RWPE1 (cell line): ENCODE measurements at regions of chr12 and their contacts with region 1.

Region 1: GRCh38 chr12:56468216-56469006 is at the start of gene SPRYD4:
- DNase-seq: peak; percentile 93
- H3K27ac ChIP-seq: peak within 1 kb of the TSS; percentile 83
- CTCF ChIP-seq: peak; percentile 56

Region 2: GRCh38 chr12:56448860-56449621 is 19.4 kb before region 1 on chr12 and contains the start of gene TIMELESS:
- CTCF ChIA-PET with region 1: interaction called, 10 read pairs
- POLR2A ChIA-PET with region 1: interaction called, 5 read pairs
- DNase-seq: peak; percentile 98
- H3K27ac ChIP-seq: peak within 1 kb of the TSS; percentile 97
- CTCF ChIP-seq: no peak

Region 3: DNA sequence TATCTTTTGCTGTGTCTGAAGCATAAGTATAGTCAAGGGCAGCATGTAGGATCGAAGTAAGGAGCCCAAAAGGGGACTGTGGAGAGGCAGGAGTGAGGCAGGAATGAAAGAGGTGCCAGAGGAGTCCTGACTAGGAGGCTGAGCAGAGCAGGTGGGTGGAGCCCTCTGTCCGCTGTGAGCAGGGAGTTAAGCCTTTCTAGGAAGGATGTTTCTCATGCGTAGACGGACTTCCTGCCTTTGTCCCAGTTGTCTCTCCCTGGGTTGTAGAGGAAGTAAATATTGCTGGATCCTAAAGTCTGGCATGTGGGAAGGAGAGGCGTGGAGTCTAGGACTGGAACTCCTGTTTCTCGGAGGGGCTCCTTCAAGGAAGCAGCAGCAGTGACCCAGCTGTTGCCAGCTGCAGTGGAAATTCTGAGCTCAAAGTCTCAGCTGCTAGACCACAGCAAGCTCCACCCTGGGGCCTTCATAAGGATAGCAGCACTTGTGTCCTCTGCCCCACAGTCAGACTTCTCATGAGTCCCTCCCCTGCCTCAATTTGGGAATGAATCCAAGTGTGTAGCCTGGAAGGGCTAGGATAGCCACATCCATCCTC is 97.2 kb after region 1 on chr12:
- CTCF ChIA-PET with region 1: interaction called, 10 read pairs
- POLR2A ChIA-PET with region 1: no interaction called
- DNase-seq: no peak
- H3K27ac ChIP-seq: peak overlapping the region; percentile 38
- CTCF ChIP-seq: no peak